ENCODE measurements at regions of chr2 and their contacts with region 1.

Region 1: DNA sequence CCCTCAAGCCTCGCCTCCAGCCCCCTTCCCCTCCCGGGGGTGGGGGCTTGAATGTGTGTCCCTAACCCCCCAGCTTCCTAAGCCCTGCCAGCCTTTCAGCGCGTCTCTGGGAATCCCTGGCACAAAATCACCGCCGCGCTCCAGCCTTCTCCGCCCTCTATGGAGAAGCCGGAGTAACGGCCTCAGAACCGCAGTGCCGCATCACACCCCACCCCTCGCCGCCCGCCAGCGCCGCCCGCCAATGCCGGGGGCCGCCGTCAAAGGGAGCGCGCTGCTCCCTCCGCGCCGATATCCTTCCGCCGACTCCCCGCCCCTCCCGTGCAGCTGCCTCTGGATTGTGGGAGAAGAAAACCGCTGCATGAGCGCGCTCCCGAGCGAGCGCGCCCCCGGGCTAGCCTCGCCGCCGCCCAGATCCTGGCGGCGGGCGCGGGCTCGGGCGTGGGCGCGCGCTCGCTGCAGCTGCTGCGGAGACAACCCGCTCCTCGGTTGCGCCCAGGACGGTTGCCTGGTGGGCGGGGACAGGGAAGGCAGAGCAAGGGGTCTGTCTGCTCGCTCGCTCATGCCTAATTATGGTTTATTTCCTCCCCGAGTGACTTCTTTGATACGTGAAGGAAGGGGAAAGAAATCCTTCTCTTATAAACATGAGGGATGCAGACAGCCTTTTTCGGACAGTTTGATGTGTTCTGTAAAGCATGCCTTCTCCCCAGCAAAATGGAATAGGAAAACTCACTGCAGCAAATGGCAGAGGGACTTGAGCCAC is at the start of gene CCDC88A:
- DNase-seq: peak; percentile 92 to 94
- H3K4me3 ChIP-seq: peak within 1 kb of the TSS; percentile 65 to 86 (median 72)
- H3K27ac ChIP-seq: peak within 1 kb of the TSS; percentile 62 to 81 (median 76)
- H3K4me1 ChIP-seq: peaks cover 5 to 6% of the 10 kb centered on the region in 2 donors
- H3K27me3 ChIP-seq: no peaks in the 10 kb centered on the region
- CTCF ChIP-seq: peak in 3 of 6 experiments; percentile 16 to 38 (median 31)
- POLR2A ChIP-seq: peak in 1 of 2 donors; percentile 73
- total RNA-seq, gene CCDC88A: 35.9 to 51.5 (median 42.5) TPM

Region 2: DNA sequence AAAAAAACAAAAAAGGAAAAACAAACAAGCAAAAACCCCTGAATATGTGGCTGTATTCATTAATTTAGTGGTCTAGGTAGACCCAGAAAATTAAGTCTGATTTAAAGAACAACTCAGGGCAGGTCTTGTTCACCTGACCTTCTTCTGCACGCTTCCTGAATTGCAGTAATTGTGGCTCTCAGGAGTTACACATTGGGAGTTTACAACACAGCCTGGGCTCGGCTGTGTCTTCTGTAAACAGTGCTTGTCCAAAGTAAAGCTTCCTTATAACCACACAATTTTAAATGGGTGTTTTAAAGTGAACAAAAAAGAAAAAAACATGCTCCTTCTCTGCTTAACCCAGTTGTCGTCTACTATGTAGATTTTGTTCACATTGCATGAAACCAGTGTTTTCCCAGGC is 142.5 kb before region 1 on chr2:
- intact Hi-C with region 1: loop called (anchors 10 kb)
- DNase-seq: no peak
- H3K4me3 ChIP-seq: no peak overlapping the region
- H3K27ac ChIP-seq: no peak overlapping the region
- H3K4me1 ChIP-seq: peaks cover 0 to 4% of the 10 kb centered on the region in 2 donors
- H3K27me3 ChIP-seq: no peaks in the 10 kb centered on the region
- CTCF ChIP-seq: no peak
- POLR2A ChIP-seq: no peak

Region 3: GRCh38 chr2:55519938-55520885 is 100.4 kb after region 1 on chr2:
- intact Hi-C with region 1: no loop called
- DNase-seq: peak; percentile 36 to 39
- H3K4me3 ChIP-seq: peak overlapping the region; percentile 81 to 92 (median 86)
- H3K27ac ChIP-seq: peak overlapping the region; percentile 56 to 91 (median 83)
- H3K4me1 ChIP-seq: peaks cover 6 to 7% of the 10 kb centered on the region in 2 donors
- H3K27me3 ChIP-seq: no peaks in the 10 kb centered on the region
- CTCF ChIP-seq: no peak
- POLR2A ChIP-seq: no peak